Cardiac septum (tissue), 1 donor: ENCODE measurements at regions of chr5 and their contacts with region 1.

Region 1: DNA sequence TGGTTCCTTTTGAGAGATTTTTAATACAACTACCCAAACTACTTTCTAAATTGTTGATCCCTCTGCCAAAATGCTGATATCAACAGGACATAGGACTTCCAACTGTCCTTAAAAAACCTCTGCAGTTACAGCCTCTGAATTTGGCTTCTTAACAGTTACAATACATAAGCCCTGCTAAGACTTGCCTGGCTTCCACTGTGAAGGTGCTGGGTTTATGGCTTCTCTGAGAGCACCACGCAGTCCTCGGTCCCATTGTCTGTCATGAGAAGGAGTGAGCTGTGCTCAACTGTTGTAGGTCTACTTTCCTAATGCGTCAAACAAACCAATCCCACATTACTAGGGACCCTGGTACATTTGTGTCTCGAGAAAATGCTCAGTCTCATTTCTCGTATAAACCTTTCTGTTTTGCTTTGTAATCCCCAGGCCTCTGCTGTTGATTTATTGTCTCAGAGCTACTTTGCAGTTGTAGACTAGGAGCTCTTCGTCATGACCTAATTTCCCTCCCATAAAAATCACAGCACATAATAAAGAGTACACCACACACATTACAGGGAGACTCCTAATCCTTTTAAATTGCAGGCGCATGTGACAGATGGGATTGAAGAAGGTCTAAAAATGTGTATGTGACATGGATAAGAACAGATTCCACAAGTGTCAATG is 274.9 kb downstream of the NR3C1 start:
- DNase-seq: no peak

Region 2: DNA sequence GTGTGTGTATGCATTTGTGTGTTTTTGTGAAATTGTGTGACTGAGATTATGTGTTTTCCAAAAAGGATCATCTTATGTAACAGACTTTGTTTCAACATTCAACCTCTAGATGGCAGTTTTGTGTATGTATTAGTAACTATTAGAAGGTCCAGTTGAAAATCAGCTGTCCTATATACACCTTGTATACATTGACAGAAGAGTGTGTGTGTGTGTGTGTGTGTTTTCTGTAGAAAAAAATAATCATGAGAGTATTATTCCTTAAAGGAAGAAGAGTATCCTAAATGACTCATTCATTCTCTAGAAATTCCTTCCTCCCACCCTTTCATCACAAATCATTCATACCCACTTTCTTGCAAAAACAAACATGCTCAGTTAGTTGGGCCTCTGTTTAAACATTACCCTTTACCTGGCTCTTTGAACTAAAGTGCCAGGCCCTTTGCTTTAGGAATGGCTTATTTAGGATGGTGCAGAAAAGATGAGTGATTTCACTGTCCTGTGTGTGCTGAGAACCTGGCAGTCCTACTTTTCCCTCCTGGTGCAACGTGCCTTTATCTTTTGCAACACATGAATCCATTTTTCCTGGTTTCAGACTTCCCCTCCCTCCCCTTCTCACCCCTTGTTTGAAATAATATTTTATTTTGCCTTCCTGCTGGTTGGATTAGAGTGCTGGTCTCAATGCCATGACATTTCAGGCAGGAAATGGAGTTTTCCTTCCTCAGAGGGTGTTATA is 206.2 kb before region 1 on chr5:
- intact Hi-C with region 1: no loop called
- DNase-seq: no peak

Region 3: DNA sequence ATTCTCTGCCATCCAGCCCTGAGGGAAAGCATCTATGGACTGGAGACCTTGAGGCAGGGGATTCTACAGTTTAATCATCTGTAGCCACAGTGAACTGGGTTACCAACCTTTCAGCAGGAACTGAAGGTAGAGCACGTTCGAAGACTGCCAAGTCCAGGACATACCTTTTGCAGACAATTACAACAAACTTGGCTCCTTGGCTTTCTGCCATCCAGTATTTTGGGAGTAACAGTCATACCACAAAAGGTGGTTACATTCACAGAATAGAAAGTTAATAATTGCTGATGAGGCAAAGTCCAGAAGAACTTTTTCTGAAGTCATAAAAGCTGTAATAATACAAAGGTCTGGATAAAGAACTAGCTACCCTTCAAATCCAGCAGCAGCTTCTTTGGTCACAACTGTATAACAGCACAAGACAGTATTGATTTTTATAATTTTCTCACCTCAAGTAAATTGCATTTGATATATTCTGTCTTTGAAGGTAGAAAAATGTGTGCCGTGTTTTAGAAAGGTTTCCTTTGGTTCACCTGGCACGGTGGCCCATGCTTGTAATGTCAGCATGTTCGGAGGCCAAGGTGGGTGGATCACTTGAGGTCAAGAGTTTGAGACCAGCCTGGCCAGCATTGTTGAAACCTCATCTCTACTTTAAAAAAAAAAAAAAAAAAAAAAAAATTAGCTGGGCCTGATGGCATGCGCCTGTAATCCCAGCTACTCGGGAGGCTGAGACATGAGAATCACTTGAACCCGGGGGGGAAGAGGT is 38.3 kb after region 1 on chr5:
- intact Hi-C with region 1: no loop called
- DNase-seq: no peak

Region 4: GRCh38 chr5:143213851-143214363 is 85.4 kb after region 1 on chr5:
- intact Hi-C with region 1: loop called (anchors 5 kb)
- DNase-seq: no peak